ENCODE measurements at regions of chr15 and their contacts with region 1.

Region 1: DNA sequence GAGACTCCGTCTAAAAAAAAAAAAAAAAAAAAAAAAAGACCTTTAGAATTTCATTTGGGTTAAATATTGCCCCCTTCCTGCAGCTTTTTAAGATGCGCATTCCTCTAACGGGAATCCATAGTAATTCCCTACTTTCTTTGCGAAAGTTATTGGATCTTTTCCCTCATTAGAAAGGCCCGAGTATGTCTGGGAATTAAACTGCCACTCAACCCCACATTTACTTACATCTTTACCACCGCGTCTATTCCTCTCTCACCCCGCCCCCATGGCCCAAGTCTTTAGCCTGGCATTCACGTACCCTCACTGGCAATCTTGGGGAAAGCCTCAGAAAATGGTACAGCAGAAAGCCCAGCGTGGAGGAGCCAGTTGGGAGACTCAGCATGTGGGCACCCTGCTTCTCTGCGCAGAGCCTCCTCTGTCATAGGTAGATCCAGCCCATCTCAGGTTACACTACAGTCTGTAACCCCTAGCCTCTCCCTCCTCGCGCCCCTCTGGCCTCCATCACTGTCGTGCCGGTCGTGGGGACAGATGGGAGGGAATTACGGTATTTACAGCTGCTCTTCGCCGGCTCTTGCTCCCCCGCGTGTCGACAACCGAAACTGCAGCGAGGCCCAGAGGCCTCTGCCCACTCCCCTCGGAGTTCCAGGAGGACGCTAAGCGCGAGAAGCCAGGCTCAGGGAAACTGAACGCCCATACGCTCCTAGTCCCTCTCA is 6.4 kb upstream of the ANKDD1A start:
- DNase-seq: peak; percentile 88
- ATAC-seq: peak; percentile 95
- H3K4me3 Mint-ChIP-seq: peak overlapping the region; percentile 69
- H3K27ac Mint-ChIP-seq: peak overlapping the region; percentile 49
- H3K4me1 Mint-ChIP-seq: peaks cover 27% of the 10 kb centered on the region
- H3K27me3 Mint-ChIP-seq: no peaks in the 10 kb centered on the region
- CTCF ChIP-seq: peak; percentile 89

Region 2: DNA sequence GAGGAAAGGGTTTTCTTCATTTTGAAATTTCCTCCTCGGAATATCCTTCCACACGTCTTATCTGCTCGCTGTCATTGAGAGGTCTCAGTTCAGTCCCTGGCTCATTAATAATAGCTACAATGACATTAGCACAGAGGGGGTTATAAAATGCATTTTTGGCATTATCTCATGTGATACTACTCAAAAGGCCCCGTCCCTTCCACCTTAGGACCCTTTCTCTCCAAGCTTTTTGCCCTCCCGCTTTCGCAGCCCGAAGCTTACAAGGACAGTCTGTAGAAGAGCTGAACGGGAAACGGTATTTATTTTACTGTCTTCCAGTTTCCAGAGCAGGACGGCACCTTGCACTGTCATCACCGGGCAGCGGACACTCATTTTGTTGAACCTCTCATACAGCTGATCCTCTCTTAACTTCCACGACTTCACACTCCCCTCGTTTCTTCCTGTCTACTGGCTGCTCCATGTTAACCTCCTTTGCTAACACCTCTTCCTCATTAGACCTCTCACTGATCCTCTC is 69.2 kb before region 1 on chr15:
- CTCF ChIA-PET with region 1: interaction called, 12 read pairs
- POLR2A ChIA-PET with region 1: no interaction called
- intact Hi-C with region 1: no loop called
- DNase-seq: no peak
- ATAC-seq: peak; percentile 7
- H3K4me3 Mint-ChIP-seq: peak overlapping the region; percentile 45
- H3K27ac Mint-ChIP-seq: peak overlapping the region; percentile 63
- H3K4me1 Mint-ChIP-seq: peaks cover 45% of the 10 kb centered on the region
- H3K27me3 Mint-ChIP-seq: no peaks in the 10 kb centered on the region
- CTCF ChIP-seq: peak; percentile 55

Region 3: DNA sequence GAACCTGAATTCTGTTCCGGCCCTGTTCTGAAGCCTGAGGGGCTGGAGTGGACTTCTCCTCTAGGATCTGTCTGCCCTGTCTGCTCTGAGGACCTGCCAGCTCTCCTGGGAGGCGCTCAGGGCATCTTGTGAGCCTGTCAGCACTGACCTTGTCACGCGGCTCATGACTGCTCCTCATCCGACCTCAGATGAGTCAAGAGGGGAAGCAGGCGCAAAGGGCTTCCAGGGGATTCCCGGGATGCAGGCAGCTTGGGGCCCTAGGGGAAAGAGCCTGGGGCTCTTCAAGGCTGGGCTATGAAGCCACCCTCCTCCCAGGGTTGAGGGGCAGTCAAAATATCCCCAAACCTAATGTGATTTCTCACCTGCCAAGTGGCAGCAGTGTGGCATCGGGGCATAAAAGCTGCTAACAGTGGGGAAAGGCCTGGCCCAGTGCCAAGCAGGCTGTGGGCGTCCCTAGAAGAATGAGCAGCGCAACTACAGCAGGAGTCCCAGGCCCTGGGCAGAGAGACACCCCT is 21.2 kb before region 1 on chr15:
- CTCF ChIA-PET with region 1: interaction called, 3 read pairs
- POLR2A ChIA-PET with region 1: interaction called, 10 read pairs
- intact Hi-C with region 1: no loop called
- DNase-seq: peak; percentile 94
- ATAC-seq: peak; percentile 77
- H3K4me3 Mint-ChIP-seq: peak overlapping the region; percentile 58
- H3K27ac Mint-ChIP-seq: peak overlapping the region; percentile 90
- H3K4me1 Mint-ChIP-seq: peaks cover 31% of the 10 kb centered on the region
- H3K27me3 Mint-ChIP-seq: no peaks in the 10 kb centered on the region
- CTCF ChIP-seq: no peak

Region 4: GRCh38 chr15:64893481-64894394 is 11.5 kb before region 1 on chr15:
- CTCF ChIA-PET with region 1: interaction called, 32 read pairs
- POLR2A ChIA-PET with region 1: interaction called, 5 read pairs
- intact Hi-C with region 1: no loop called
- DNase-seq: peak; percentile 99
- ATAC-seq: peak; percentile 82
- H3K4me3 Mint-ChIP-seq: peak overlapping the region; percentile 91
- H3K27ac Mint-ChIP-seq: peak overlapping the region; percentile 99
- H3K4me1 Mint-ChIP-seq: peaks cover 54% of the 10 kb centered on the region
- H3K27me3 Mint-ChIP-seq: no peaks in the 10 kb centered on the region
- CTCF ChIP-seq: no peak